ENCODE measurements at regions of chr17 and their contacts with region 1.

Region 1: DNA sequence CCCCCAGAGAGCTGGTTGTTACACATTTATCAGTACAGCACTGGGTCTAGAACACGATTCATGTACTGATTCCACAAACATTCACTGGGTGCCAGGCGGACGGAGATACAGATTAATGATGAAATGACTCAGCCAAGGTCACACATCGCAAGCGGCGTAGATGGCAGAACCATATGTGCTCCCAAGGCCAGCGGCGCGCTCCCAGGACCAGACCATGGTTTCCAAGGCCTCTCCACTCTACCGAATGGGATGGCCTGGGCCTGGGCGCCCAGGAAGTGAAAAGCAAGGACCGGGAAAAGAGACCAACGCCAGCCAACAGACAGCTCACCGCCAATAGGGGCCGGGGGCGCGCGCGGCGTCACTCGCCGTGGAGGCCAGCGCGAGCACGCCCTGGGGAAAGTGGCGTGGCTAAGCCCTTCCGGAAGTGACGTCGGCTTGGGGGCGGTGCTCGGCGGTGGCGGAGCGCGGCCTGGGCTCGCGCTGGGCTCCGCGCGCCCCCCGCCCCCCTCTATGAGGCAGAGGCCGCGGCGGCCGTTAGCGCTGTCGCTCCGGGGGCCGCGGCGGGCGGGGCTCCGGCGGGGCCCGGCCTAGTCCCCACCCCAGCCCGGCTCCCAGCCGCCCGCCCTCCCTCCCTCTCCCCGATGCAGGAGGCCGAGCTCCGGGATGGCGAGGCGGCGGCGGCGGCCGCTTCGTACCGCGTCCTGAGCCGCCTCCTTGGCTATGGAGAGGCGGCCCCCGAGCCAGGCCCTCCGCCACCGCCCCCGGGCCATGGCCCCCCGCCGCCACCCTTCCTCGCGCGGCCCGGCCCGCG is at the start of gene SOCS7:
- DNase-seq: peak; percentile 36 to 95
- H3K4me3 ChIP-seq: peak within 1 kb of the TSS; percentile 67 to 87 (median 74)
- H3K27ac ChIP-seq: peak within 1 kb of the TSS; percentile 9; the same call in 1 of the 2 replicates
- H3K4me1 ChIP-seq: peaks cover 0 to 13% (median 4%) of the 10 kb centered on the region in 4 experiments; a peak in 5 of 7 replicates
- H3K27me3 ChIP-seq: no peaks in the 10 kb centered on the region; a peak in 1 of 7 replicates
- CTCF ChIP-seq: no peak
- EP300 ChIP-seq: no peak
- POLR2A ChIP-seq: no peak; a peak in 1 of 3 replicates
- RAD21 ChIP-seq: no peak
- total RNA-seq, gene SOCS7: 26.9 and 28.2 TPM in 2 replicates

Region 2: GRCh38 chr17:38322091-38322779 is 29.4 kb before region 1 on chr17:
- CTCF ChIA-PET with region 1: interaction called, 192 read pairs
- POLR2A ChIA-PET with region 1: interaction called, 21 read pairs
- DNase-seq: peak in 1 of 2 experiments; percentile 91
- H3K4me3 ChIP-seq: no peak overlapping the region
- H3K27ac ChIP-seq: no peak overlapping the region
- H3K4me1 ChIP-seq: peaks cover 0 to 10% (median 7%) of the 10 kb centered on the region in 4 experiments; a peak in 4 of 7 replicates
- H3K27me3 ChIP-seq: no peaks in the 10 kb centered on the region
- CTCF ChIP-seq: peak; percentile 58 to 80 (median 70); a peak in 3 of 4 replicates
- EP300 ChIP-seq: no peak
- POLR2A ChIP-seq: no peak
- RAD21 ChIP-seq: peak in 1 of 2 experiments; percentile 53; a peak in 2 of 4 replicates

Region 3: GRCh38 chr17:38341035-38341721 is 10.4 kb before region 1 on chr17:
- CTCF ChIA-PET with region 1: interaction called, 192 read pairs
- POLR2A ChIA-PET with region 1: interaction called, 4 read pairs
- DNase-seq: peak in 1 of 2 experiments; percentile 17
- H3K4me3 ChIP-seq: no peak overlapping the region
- H3K27ac ChIP-seq: no peak overlapping the region
- H3K4me1 ChIP-seq: peaks cover 0 to 9% (median 3%) of the 10 kb centered on the region in 4 experiments; a peak in 3 of 7 replicates
- H3K27me3 ChIP-seq: no peaks in the 10 kb centered on the region
- CTCF ChIP-seq: no peak
- EP300 ChIP-seq: no peak
- POLR2A ChIP-seq: no peak
- RAD21 ChIP-seq: no peak

Region 4: DNA sequence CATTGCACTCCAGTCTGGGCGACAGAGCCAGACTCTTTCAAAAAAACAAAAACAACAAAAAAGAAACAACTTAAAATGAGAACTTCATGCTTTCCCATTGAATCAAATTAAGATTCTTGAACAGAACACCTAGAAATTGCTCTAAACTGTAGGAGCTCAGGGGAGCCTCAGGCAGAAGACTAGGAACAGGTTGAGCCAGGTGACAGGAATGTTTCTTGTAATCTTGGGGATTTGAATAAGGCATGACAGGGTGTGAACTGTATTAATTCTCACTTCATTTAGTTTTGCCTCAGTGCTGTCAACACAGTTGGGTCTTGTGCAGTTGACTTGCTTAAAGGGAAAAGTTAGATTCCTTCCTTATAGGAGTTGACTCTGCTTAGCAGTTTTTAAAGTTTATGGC is 27.8 kb after region 1 on chr17:
- CTCF ChIA-PET with region 1: interaction called, 47 read pairs
- POLR2A ChIA-PET with region 1: interaction called, 4 read pairs
- DNase-seq: no peak
- H3K4me3 ChIP-seq: no peak overlapping the region
- H3K27ac ChIP-seq: no peak overlapping the region
- H3K4me1 ChIP-seq: no peaks in the 10 kb centered on the region
- H3K27me3 ChIP-seq: no peaks in the 10 kb centered on the region
- CTCF ChIP-seq: no peak
- EP300 ChIP-seq: no peak
- POLR2A ChIP-seq: no peak
- RAD21 ChIP-seq: no peak

Region 5: GRCh38 chr17:38415250-38416194 is 63.9 kb after region 1 on chr17:
- CTCF ChIA-PET with region 1: interaction called, 400 read pairs
- POLR2A ChIA-PET with region 1: interaction called, 70 read pairs
- DNase-seq: peak in 1 of 2 experiments; percentile 86
- H3K4me3 ChIP-seq: peak overlapping the region in 3 of 4 experiments; percentile 20 to 55 (median 39); a peak in 6 of 8 replicates
- H3K27ac ChIP-seq: peak overlapping the region; percentile 94
- H3K4me1 ChIP-seq: peaks cover 4 to 44% (median 37%) of the 10 kb centered on the region in 4 experiments
- H3K27me3 ChIP-seq: peaks cover 0 to 19% (median 7%) of the 10 kb centered on the region in 4 experiments; a peak in 4 of 7 replicates
- CTCF ChIP-seq: no peak; a peak in 1 of 4 replicates
- EP300 ChIP-seq: peak in 1 of 2 experiments; percentile 57; a peak in 1 of 3 replicates
- POLR2A ChIP-seq: peak in 1 of 2 experiments; percentile 74; a peak in 2 of 3 replicates
- RAD21 ChIP-seq: no peak

Region 6: GRCh38 chr17:38428112-38428642 is 76.6 kb after region 1 on chr17 and contains the start of gene ARHGAP23:
- CTCF ChIA-PET with region 1: interaction called, 400 read pairs
- POLR2A ChIA-PET with region 1: no interaction called
- DNase-seq: peak in 1 of 2 experiments; percentile 67
- H3K4me3 ChIP-seq: peak within 1 kb of the TSS; percentile 66 to 91 (median 72)
- H3K27ac ChIP-seq: no peak within 1 kb of the TSS; the same call in 1 of the 2 replicates
- H3K4me1 ChIP-seq: peaks cover 22 to 35% (median 25%) of the 10 kb centered on the region in 4 experiments
- H3K27me3 ChIP-seq: no peaks in the 10 kb centered on the region
- CTCF ChIP-seq: no peak
- EP300 ChIP-seq: no peak
- POLR2A ChIP-seq: no peak
- RAD21 ChIP-seq: peak in 1 of 2 experiments; percentile 1; a peak in 1 of 4 replicates
- total RNA-seq, gene ARHGAP23: 107 and 108 TPM in 2 replicates

Measured in H1 (cell line).